ENCODE measurements at regions of chr6 and their contacts with region 1.

Region 1: GRCh38 chr6:13711733-13712598 is at the start of gene RANBP9:
- DNase-seq: peak; percentile 92
- ATAC-seq: peak; percentile 78
- H3K4me3 Mint-ChIP-seq: peak within 1 kb of the TSS; percentile 85
- H3K27ac Mint-ChIP-seq: peak within 1 kb of the TSS; percentile 96
- H3K4me1 Mint-ChIP-seq: peaks cover 49% of the 10 kb centered on the region
- H3K27me3 Mint-ChIP-seq: no peaks in the 10 kb centered on the region
- total RNA-seq, gene RANBP9: 50.8 to 65.0 TPM

Region 2: DNA sequence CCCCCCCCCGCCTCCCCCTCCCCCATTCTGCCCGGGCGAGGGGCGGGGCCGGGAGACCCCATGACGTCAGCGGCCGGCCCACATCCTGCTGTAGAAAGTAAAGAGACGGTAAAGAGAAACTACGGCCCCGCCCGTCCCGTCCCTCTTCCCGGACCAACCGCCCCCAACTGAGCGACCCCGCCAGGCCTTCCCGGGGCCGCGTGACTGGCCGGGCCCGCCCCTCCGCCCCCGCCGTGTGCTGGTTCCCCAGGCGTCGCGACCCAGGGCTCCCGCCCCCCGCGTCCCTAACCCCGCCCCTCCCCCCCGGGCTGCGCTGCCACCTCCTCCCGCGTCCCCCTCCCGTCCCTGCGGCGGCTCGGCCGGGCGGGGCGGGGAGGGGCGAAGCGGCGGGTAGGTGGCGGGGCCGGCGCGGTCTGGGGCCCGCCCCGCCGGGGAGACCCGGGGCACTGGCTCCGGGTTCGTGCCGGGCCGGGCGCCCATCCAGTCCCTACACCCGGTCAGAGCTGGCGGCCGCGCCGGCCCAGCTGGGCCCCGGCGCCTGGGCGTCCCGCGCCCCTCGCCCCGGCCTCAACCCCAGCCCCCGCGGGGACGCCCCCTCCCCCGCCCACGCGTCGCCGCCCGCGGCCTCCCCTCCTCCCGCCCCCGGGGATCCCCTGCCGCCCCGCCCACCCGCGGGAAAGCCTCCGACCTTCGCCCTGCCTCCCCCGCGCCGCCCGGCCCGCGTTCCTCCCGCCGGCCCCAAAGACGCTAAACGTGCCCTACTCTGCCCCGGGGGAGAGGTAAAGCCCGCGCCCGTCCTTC is 1700.5 kb before region 1 on chr6:
- CTCF ChIA-PET with region 1: no interaction called
- POLR2A ChIA-PET with region 1: no interaction called
- intact Hi-C with region 1: loop called in 1 of 2 experiments (anchors 5 kb)
- DNase-seq: peak; percentile 99
- ATAC-seq: peak; percentile 77
- H3K4me3 Mint-ChIP-seq: peak overlapping the region; percentile 96
- H3K27ac Mint-ChIP-seq: peak overlapping the region; percentile 98
- H3K4me1 Mint-ChIP-seq: peaks cover 39% of the 10 kb centered on the region
- H3K27me3 Mint-ChIP-seq: no peaks in the 10 kb centered on the region

Region 3: GRCh38 chr6:13427801-13428582 is 284.0 kb before region 1 on chr6:
- CTCF ChIA-PET with region 1: no interaction called
- POLR2A ChIA-PET with region 1: no interaction called
- intact Hi-C with region 1: loop called in 1 of 2 experiments (anchors 1 kb)
- DNase-seq: peak; percentile 90
- ATAC-seq: peak; percentile 68
- H3K4me3 Mint-ChIP-seq: peak overlapping the region; percentile 58
- H3K27ac Mint-ChIP-seq: peak overlapping the region; percentile 95
- H3K4me1 Mint-ChIP-seq: peaks cover 76% of the 10 kb centered on the region
- H3K27me3 Mint-ChIP-seq: no peaks in the 10 kb centered on the region

Region 4: DNA sequence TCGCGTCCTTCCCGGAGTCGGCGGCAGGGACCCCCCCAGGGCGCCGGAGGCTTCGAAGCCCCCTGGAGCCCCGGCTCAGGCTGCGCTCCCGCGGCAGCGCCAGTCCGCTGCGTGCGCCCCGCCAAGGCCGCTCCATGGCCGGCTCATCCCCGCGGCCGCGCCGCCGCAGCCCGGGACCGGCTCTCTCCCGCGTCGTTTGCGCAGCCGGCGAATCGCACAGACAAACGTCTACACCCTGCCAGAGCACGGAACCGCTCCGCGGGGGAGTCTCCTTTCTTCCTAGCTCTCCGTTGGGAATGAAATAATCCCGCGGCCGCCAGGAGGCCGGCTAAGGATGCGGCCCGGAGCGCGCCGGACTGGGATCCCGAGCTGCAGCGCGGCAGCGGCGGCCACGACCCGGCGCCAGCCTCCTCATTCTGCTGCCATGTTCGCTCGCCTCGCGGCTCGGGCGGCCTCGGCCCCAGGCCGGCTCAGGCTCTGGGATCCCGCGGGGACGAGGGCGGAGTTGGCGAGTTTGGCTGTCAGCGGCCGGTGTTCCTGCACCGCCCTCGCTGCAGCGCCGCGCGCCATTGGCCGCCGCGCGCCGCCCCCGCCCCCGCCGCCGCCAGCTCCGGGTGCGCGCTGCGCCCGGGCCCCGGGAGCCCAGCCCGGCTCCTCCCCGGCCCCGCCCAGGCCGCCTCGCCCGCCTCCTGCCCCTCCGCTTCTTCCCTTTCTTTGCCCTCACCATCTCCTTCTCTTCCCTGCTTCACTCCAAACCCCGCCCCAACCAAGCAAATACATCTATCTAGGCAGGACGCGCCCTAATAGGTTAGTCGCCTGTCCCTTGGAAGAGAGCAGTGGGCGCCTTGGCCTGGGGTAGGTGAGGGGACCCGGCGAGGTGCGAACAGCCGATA is 224.6 kb before region 1 on chr6 and contains the start of gene GFOD1:
- CTCF ChIA-PET with region 1: no interaction called
- POLR2A ChIA-PET with region 1: no interaction called
- intact Hi-C with region 1: loop called in 1 of 2 experiments (anchors 2 kb)
- DNase-seq: peak; percentile 87
- ATAC-seq: peak; percentile 83
- H3K4me3 Mint-ChIP-seq: peak within 1 kb of the TSS; percentile 83
- H3K27ac Mint-ChIP-seq: peak within 1 kb of the TSS; percentile 74
- H3K4me1 Mint-ChIP-seq: peaks cover 36% of the 10 kb centered on the region
- H3K27me3 Mint-ChIP-seq: peaks cover 8% of the 10 kb centered on the region
- total RNA-seq, gene GFOD1: 4.2 to 5.8 TPM

Region 5: GRCh38 chr6:13668291-13668928 is 43.6 kb before region 1 on chr6:
- CTCF ChIA-PET with region 1: interaction called, 5 read pairs
- POLR2A ChIA-PET with region 1: interaction called, 4 read pairs
- intact Hi-C with region 1: loop called (anchors 1 to 2 kb)
- DNase-seq: no peak
- ATAC-seq: peak; percentile 75
- H3K4me3 Mint-ChIP-seq: peak overlapping the region; percentile 20
- H3K27ac Mint-ChIP-seq: peak overlapping the region; percentile 6
- H3K4me1 Mint-ChIP-seq: peaks cover 88% of the 10 kb centered on the region
- H3K27me3 Mint-ChIP-seq: no peaks in the 10 kb centered on the region

Region 6: DNA sequence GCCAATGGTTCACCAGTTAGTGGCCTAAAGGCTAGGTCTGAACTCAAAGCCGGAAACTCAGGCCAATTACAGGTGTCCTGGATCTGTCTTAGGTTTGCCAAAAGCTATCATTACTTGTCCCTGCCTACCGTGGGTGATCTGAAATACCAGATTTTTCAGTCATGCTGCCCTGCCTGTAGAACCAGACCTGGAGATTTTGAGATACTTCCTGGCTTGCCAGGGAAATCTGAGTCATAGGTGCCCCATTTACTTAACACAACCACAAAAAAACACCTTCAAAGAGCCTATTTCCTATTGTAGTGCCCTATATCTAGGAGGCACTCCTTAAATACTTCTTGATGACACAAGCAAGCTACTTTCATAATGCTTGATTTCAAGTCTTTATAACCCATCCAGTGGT is 13.6 kb after region 1 on chr6:
- CTCF ChIA-PET with region 1: interaction called, 3 read pairs
- POLR2A ChIA-PET with region 1: no interaction called
- intact Hi-C with region 1: loop called in 1 of 2 experiments (anchors 1 kb)
- DNase-seq: peak; percentile 52
- ATAC-seq: peak; percentile 91
- H3K4me3 Mint-ChIP-seq: no peak overlapping the region
- H3K27ac Mint-ChIP-seq: peak overlapping the region; percentile 72
- H3K4me1 Mint-ChIP-seq: peaks cover 29% of the 10 kb centered on the region
- H3K27me3 Mint-ChIP-seq: no peaks in the 10 kb centered on the region

Region 7: GRCh38 chr6:13795041-13795750 is 83.2 kb after region 1 on chr6:
- CTCF ChIA-PET with region 1: interaction called, 4 read pairs
- POLR2A ChIA-PET with region 1: no interaction called
- intact Hi-C with region 1: loop called in 1 of 2 experiments (anchors 2 kb)
- DNase-seq: peak; percentile 94
- ATAC-seq: peak; percentile 97
- H3K4me3 Mint-ChIP-seq: no peak overlapping the region
- H3K27ac Mint-ChIP-seq: peak overlapping the region; percentile 66
- H3K4me1 Mint-ChIP-seq: peaks cover 23% of the 10 kb centered on the region
- H3K27me3 Mint-ChIP-seq: no peaks in the 10 kb centered on the region

Measured in activated CD4-positive, alpha-beta T cell treated with anti-CD3 and anti-CD28 coated beads for 36 hours (primary cell).